Activated CD4-positive, alpha-beta T cell treated with anti-CD3 and anti-CD28 coated beads, Interleukin-2, amount 10 ng/mL, durations not matched to agents 7 days and 5 days (primary cell): ENCODE measurements at regions of chr12 and their contacts with region 1.

Region 1: GRCh38 chr12:49515266-49515665 is 23.6 kb upstream of the KCNH3 start:
- DNase-seq: no peak
- H3K4me3 Mint-ChIP-seq: no peak overlapping the region
- H3K27ac Mint-ChIP-seq: no peak overlapping the region
- H3K4me1 Mint-ChIP-seq: peaks cover 2% of the 10 kb centered on the region
- H3K27me3 Mint-ChIP-seq: no peaks in the 10 kb centered on the region

Region 2: GRCh38 chr12:49358483-49359141 is 156.7 kb before region 1 on chr12:
- CTCF ChIA-PET with region 1: interaction called, 66 read pairs
- POLR2A ChIA-PET with region 1: no interaction called
- DNase-seq: peak; percentile 73
- H3K4me3 Mint-ChIP-seq: no peak overlapping the region
- H3K27ac Mint-ChIP-seq: no peak overlapping the region
- H3K4me1 Mint-ChIP-seq: peaks cover 3% of the 10 kb centered on the region
- H3K27me3 Mint-ChIP-seq: peaks cover 33% of the 10 kb centered on the region

Region 3: GRCh38 chr12:49366652-49367380 is 148.4 kb before region 1 on chr12:
- CTCF ChIA-PET with region 1: interaction called, 12 read pairs
- POLR2A ChIA-PET with region 1: no interaction called
- DNase-seq: peak; percentile 88
- H3K4me3 Mint-ChIP-seq: peak overlapping the region; percentile 90
- H3K27ac Mint-ChIP-seq: peak overlapping the region; percentile 97
- H3K4me1 Mint-ChIP-seq: peaks cover 43% of the 10 kb centered on the region
- H3K27me3 Mint-ChIP-seq: no peaks in the 10 kb centered on the region

Region 4: DNA sequence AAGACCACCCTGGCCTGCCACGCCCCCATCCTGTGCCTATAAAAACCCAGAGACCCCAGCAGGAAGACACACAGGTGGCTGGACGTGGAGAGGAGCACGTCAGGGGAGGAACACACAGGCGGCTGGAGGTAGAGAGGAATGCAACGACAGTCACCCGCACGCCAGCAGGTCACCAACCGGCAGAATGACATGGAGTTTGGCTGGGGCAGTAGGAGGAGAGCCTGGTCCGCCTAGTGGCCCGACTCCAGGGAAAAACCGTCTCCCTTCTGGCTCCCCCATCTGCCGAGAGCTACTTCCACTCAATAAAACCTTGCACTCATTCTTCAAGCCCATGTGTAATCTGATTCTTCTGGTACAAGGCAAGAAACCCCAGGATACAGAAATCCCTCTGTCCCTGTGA is 39.2 kb before region 1 on chr12:
- CTCF ChIA-PET with region 1: no interaction called
- POLR2A ChIA-PET with region 1: no interaction called
- DNase-seq: no peak
- H3K4me3 Mint-ChIP-seq: no peak overlapping the region
- H3K27ac Mint-ChIP-seq: no peak overlapping the region
- H3K4me1 Mint-ChIP-seq: peaks cover 8% of the 10 kb centered on the region
- H3K27me3 Mint-ChIP-seq: no peaks in the 10 kb centered on the region

Region 5: GRCh38 chr12:49534731-49535278 is 19.5 kb after region 1 on chr12:
- CTCF ChIA-PET with region 1: no interaction called
- POLR2A ChIA-PET with region 1: no interaction called
- DNase-seq: no peak
- H3K4me3 Mint-ChIP-seq: no peak overlapping the region
- H3K27ac Mint-ChIP-seq: no peak overlapping the region
- H3K4me1 Mint-ChIP-seq: peaks cover 13% of the 10 kb centered on the region
- H3K27me3 Mint-ChIP-seq: peaks cover 29% of the 10 kb centered on the region

Region 6: GRCh38 chr12:49548481-49548821 is 33.2 kb after region 1 on chr12:
- CTCF ChIA-PET with region 1: no interaction called
- POLR2A ChIA-PET with region 1: no interaction called
- DNase-seq: no peak
- H3K4me3 Mint-ChIP-seq: peak overlapping the region; percentile 39
- H3K27ac Mint-ChIP-seq: no peak overlapping the region
- H3K4me1 Mint-ChIP-seq: peaks cover 5% of the 10 kb centered on the region
- H3K27me3 Mint-ChIP-seq: peaks cover 29% of the 10 kb centered on the region